Endothelial cell of umbilical vein (primary cell): ENCODE measurements at regions of chr5 and their contacts with region 1.

Region 1: GRCh38 chr5:53733852-53734251 is 173.4 kb downstream of the NDUFS4 start:
- DNase-seq: no peak
- H3K4me3 ChIP-seq: no peak overlapping the region
- H3K27ac ChIP-seq: no peak overlapping the region
- H3K4me1 ChIP-seq: peaks cover 16% of the 10 kb centered on the region
- H3K27me3 ChIP-seq: peaks cover 0 to 2% of the 10 kb centered on the region in 2 experiments
- CTCF ChIP-seq: no peak
- POLR2A ChIP-seq: no peak

Region 2: DNA sequence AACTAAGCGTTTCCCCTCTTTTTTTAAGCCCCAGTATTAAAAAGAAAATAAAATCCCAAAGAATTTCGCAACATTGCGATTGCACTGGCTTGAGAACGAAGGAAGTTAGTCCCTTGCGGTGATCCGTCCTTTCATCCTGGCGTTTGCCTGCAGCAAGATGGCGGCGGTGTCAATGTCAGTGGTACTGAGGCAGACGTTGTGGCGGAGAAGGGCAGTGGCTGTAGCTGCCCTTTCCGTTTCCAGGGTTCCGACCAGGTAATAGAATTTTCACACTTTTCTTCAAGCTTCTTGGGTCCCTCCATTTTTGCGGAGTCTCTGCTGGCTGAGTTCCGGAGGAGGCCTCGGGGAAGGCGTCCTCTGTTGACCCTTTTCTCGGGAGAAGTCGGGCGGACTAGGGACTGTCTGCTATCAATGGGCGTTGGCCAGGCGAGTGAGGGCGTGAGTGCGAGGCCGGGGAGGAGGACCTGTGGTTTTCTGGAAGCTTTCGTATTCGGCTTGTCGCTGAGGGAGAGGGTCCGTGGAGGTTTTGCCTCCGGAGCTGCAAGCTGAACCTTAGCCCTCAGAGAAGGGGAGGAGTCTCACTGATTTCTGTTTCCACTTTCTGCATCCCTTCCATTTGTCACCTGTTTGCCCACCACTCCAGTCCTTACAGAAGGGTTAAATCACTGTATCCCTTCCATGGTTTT is 173.2 kb before region 1 on chr5 and contains the start of gene NDUFS4:
- CTCF ChIA-PET with region 1: no interaction called
- POLR2A ChIA-PET with region 1: no interaction called
- dilution Hi-C with region 1: no loop called
- intact Hi-C with region 1: loop called (anchors 5 kb)
- DNase-seq: peak; percentile 85
- H3K4me3 ChIP-seq: peak within 1 kb of the TSS; percentile 86 to 98 (median 89)
- H3K27ac ChIP-seq: peak within 1 kb of the TSS; percentile 63
- H3K4me1 ChIP-seq: peaks cover 10% of the 10 kb centered on the region
- H3K27me3 ChIP-seq: peaks cover 0 to 23% of the 10 kb centered on the region in 2 experiments
- CTCF ChIP-seq: no peak
- POLR2A ChIP-seq: peak; percentile 77
- total RNA-seq, gene NDUFS4: 76.2 and 79.1 TPM in 2 replicates

Region 3: GRCh38 chr5:53779541-53779981 is 45.7 kb after region 1 on chr5:
- CTCF ChIA-PET with region 1: no interaction called
- POLR2A ChIA-PET with region 1: no interaction called
- dilution Hi-C with region 1: no loop called
- intact Hi-C with region 1: loop called (anchors 1 kb)
- DNase-seq: peak; percentile 67
- H3K4me3 ChIP-seq: peak overlapping the region in 1 of 3 experiments; percentile 42
- H3K27ac ChIP-seq: peak overlapping the region; percentile 44
- H3K4me1 ChIP-seq: peaks cover 13% of the 10 kb centered on the region
- H3K27me3 ChIP-seq: no peaks in the 10 kb centered on the region
- CTCF ChIP-seq: no peak
- POLR2A ChIP-seq: no peak